ENCODE measurements at regions of chr11 and their contacts with region 1.

Region 1: DNA sequence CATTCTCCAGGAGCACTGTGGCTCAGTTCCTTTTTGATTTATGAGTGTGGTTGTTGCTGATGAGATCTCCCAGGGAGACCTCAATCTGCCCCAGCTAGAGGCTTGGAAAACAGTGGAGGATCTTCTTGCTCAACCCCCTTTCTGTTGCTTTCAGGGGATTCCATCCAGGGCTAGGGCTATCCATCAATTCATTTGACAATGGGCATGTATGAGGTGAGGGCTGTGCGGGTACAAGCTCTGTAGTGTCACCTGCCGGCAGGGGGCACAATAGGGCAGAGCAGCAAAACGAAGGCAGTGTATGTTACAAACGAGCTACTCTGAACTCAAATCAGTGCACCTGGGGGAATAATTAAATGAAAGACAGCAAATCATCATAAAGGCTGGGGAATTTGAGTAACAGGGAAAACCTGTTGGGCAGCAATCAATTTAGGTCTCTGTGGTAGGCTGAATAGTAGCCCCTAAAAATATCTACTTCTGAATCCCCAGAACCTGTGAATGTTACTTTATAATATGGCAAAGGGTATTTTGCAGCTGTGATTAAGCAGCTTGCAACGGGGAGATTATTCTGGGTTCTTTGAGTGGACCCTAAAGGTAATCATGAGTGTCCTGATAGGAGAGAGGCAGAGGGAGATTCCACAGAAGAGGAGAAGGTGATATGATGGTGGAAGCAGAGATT is 170.3 kb upstream of the ZBED5 start:
- DNase-seq: peak; percentile 83
- H3K4me3 Mint-ChIP-seq: no peak overlapping the region
- H3K27ac Mint-ChIP-seq: no peak overlapping the region
- H3K4me1 Mint-ChIP-seq: no peaks in the 10 kb centered on the region
- H3K27me3 Mint-ChIP-seq: peaks cover 11% of the 10 kb centered on the region

Region 2: DNA sequence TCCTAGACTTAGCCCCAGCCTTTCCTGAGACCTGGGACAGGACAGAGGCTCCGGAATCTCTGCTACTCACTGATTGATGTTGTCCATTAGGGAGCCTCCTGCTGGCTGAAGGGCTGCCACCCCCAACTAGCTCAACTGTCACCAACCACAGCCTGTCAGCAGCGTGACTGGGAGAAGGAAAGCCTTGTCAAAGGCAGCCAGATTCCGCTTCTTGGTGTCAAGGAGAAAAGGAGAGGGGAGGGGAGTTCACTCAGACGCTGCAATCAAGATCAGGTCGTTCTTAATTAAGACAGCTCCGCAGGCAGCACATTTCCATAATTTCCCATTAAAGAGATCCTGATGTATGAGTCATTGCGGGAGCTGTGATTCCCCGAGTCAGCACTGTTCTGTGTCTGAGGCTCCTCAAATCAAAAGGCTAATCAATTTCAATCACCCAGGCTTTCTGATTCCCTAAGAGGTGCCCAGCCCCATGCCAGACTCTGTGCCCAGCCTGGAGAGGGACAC is 17.5 kb before region 1 on chr11:
- CTCF ChIA-PET with region 1: interaction called, 10 read pairs
- POLR2A ChIA-PET with region 1: no interaction called
- DNase-seq: no peak
- H3K4me3 Mint-ChIP-seq: no peak overlapping the region
- H3K27ac Mint-ChIP-seq: no peak overlapping the region
- H3K4me1 Mint-ChIP-seq: no peaks in the 10 kb centered on the region
- H3K27me3 Mint-ChIP-seq: peaks cover 27% of the 10 kb centered on the region

Region 3: DNA sequence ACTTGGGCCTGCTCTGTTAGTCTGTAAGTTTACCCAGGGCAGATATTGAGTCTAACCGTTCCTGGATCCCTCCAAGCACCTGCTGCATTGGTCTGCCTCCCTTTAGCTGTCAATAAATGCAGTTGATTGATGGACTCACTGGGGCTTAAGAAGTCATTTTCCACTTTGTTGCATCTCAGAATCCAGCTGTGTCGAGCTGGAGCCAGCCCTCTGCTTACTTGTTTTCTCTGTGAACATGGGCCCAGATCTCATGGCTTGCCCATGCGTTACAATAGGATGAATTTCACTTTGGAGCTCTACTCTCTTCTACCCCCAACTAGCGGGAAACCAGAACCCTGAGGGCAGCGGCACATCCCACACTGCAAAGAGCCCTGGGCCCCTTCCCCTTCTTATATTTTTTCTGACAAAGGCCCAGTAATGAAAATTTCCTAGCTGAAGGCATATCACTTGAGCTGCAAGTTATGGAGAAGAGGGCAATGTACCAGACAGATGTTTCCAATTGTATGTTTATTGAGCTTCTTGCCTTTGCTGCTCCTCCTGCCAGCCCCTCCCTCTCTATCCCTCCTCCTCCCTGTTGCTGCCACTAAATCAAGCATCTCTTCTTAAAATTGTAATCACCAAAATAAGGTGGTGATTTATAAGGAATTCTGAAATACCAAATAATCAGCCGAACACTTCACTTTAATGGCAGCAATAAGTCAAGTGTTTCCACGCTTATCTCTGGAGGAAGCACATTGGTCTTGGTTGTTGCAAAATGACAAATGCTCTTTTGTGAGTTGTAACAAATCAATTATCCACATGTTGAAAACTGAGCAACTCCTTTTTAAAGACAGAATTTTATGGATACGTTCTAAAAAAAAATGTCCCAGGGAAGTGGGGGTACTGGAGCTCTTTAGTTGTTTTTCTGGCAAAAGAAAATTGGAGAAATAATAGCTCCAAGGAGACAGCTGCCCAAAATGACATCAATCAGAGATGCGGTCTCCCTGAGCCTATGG is 42.0 kb after region 1 on chr11:
- CTCF ChIA-PET with region 1: no interaction called
- POLR2A ChIA-PET with region 1: no interaction called
- DNase-seq: no peak
- H3K4me3 Mint-ChIP-seq: no peak overlapping the region
- H3K27ac Mint-ChIP-seq: no peak overlapping the region
- H3K4me1 Mint-ChIP-seq: no peaks in the 10 kb centered on the region
- H3K27me3 Mint-ChIP-seq: no peaks in the 10 kb centered on the region

Region 4: GRCh38 chr11:11089805-11090204 is 61.6 kb after region 1 on chr11:
- CTCF ChIA-PET with region 1: no interaction called
- POLR2A ChIA-PET with region 1: no interaction called
- DNase-seq: no peak
- H3K4me3 Mint-ChIP-seq: no peak overlapping the region
- H3K27ac Mint-ChIP-seq: no peak overlapping the region
- H3K4me1 Mint-ChIP-seq: peaks cover 3% of the 10 kb centered on the region
- H3K27me3 Mint-ChIP-seq: no peaks in the 10 kb centered on the region